Activated CD4-positive, alpha-beta T cell treated with anti-CD3 and anti-CD28 coated beads for 36 hours (primary cell): ENCODE measurements at regions of chr6 and their contacts with region 1.

Region 1: GRCh38 chr6:43516697-43517504 is at the starts of genes POLR1C and YIPF3:
- DNase-seq: peak; percentile 98
- ATAC-seq: peak; percentile 93
- H3K4me3 Mint-ChIP-seq: no peak within 1 kb of the TSS
- H3K27ac Mint-ChIP-seq: no peak within 1 kb of the TSS
- H3K4me1 Mint-ChIP-seq: peaks cover 32% of the 10 kb centered on the region
- H3K27me3 Mint-ChIP-seq: no peaks in the 10 kb centered on the region
- total RNA-seq, gene POLR1C: 43.4 to 52.9 TPM
- total RNA-seq, gene YIPF3: 38.0 to 39.6 TPM

Region 2: GRCh38 chr6:43113431-43114260 is 403.3 kb before region 1 on chr6:
- CTCF ChIA-PET with region 1: no interaction called
- POLR2A ChIA-PET with region 1: interaction called, 10 read pairs
- intact Hi-C with region 1: no loop called
- DNase-seq: no peak
- ATAC-seq: no peak
- H3K4me3 Mint-ChIP-seq: no peak overlapping the region
- H3K27ac Mint-ChIP-seq: peak overlapping the region; percentile 56
- H3K4me1 Mint-ChIP-seq: no peaks in the 10 kb centered on the region
- H3K27me3 Mint-ChIP-seq: no peaks in the 10 kb centered on the region

Region 3: DNA sequence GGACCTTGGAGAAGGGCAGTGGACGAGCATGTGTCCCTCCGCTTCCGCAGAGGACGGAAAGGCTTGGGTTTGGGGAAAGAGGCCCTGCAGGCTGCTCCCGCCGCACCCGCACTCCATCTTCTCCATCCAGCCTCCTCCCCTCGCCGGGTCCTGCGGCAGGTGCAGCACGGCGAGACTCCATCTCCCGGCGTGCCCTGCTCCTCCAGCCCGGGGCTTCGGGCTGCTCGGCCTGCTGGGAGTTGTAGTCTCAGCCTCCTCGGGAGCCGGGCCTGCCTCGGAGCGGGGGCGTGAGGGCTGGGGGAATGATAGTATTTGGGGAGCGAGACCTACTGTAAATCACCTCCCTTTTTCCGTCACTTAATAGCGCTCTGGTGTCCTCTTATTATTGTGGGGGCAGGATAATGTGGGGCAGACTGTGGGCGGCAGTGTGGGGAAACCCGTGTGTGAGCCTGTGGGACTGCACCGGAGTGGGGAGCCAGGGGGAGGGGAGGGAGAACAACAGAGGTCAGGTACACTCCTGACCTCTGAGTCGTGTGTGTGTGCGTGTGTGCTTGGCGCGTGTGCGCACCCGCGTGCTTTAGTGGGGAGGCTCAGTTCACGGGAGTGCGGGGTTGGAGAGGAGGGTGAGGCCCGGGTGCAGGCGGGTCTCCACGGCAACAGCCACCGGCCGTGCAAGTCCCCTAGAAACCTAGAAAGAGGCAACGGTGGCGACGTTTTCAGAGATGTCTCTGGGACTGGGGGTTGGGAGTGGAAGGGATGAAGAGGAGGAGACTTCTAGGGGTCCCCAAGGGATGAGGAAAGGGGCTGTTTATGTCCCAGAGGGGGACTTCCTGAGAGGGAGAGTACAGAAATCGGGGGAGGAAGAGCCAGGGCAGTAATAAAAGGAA is 269.5 kb before region 1 on chr6:
- CTCF ChIA-PET with region 1: interaction called, 3 read pairs
- POLR2A ChIA-PET with region 1: interaction called, 5 read pairs
- intact Hi-C with region 1: loop called in 1 of 2 experiments (anchors 1 kb)
- DNase-seq: peak; percentile 94
- ATAC-seq: peak; percentile 99
- H3K4me3 Mint-ChIP-seq: peak overlapping the region; percentile 68
- H3K27ac Mint-ChIP-seq: peak overlapping the region; percentile 62
- H3K4me1 Mint-ChIP-seq: peaks cover 25% of the 10 kb centered on the region
- H3K27me3 Mint-ChIP-seq: peaks cover 14% of the 10 kb centered on the region

Region 4: GRCh38 chr6:43477235-43478007 is 39.5 kb before region 1 on chr6 and contains the start of gene TJAP1:
- CTCF ChIA-PET with region 1: no interaction called
- POLR2A ChIA-PET with region 1: no interaction called
- intact Hi-C with region 1: loop called (anchors 1 to 5 kb)
- DNase-seq: peak; percentile 98
- ATAC-seq: peak; percentile 99
- H3K4me3 Mint-ChIP-seq: peak within 1 kb of the TSS; percentile 98
- H3K27ac Mint-ChIP-seq: peak within 1 kb of the TSS; percentile 82
- H3K4me1 Mint-ChIP-seq: peaks cover 38% of the 10 kb centered on the region
- H3K27me3 Mint-ChIP-seq: no peaks in the 10 kb centered on the region
- total RNA-seq, gene TJAP1: 35.6 to 37.2 TPM

Region 5: DNA sequence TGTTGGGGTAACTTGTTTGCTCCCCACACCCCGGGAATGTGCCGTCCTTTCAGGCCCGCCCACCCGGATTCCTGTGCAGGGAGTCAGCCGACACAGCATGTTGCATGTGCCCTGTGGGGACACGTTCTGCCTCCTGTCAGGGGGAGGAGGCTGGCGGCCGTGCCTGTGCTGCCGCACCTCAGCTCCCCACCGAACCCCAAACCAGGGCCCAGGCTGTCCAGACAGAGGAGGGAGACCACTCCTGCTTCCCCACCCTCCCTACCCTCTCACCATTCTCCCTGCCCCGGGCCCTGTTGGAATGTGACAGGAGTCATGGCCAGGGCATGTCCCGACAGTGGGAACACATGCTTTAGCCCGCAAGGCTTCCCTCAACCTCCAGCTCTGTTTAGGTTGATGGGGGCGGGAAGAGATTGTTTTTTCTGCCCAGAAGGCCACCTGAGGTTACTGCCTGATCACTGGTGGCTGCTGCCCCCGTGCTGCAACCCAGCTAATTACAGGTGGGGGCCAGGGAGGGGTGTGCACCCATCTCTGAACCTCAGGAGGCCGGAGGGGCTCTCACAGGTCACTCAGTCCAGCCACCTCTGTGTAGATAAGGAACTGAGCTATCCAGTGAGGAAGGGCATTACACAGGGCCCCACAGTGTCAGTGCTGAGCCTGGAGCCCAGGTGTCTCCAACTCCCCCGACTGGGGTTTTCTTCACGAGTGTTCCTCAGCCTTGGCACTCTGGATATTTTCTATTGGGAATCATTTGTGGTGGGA is 20.4 kb before region 1 on chr6:
- CTCF ChIA-PET with region 1: no interaction called
- POLR2A ChIA-PET with region 1: no interaction called
- intact Hi-C with region 1: no loop called
- DNase-seq: peak; percentile 46
- ATAC-seq: peak; percentile 45
- H3K4me3 Mint-ChIP-seq: no peak overlapping the region
- H3K27ac Mint-ChIP-seq: no peak overlapping the region
- H3K4me1 Mint-ChIP-seq: peaks cover 17% of the 10 kb centered on the region
- H3K27me3 Mint-ChIP-seq: no peaks in the 10 kb centered on the region

Region 6: GRCh38 chr6:43570876-43571441 is 54.1 kb after region 1 on chr6:
- CTCF ChIA-PET with region 1: interaction called, 3 read pairs
- POLR2A ChIA-PET with region 1: interaction called, 3 read pairs
- intact Hi-C with region 1: loop called (anchors 1 to 5 kb)
- DNase-seq: peak; percentile 19
- ATAC-seq: peak; percentile 69
- H3K4me3 Mint-ChIP-seq: peak overlapping the region; percentile 2
- H3K27ac Mint-ChIP-seq: peak overlapping the region; percentile 93
- H3K4me1 Mint-ChIP-seq: peaks cover 29% of the 10 kb centered on the region
- H3K27me3 Mint-ChIP-seq: no peaks in the 10 kb centered on the region

Region 7: DNA sequence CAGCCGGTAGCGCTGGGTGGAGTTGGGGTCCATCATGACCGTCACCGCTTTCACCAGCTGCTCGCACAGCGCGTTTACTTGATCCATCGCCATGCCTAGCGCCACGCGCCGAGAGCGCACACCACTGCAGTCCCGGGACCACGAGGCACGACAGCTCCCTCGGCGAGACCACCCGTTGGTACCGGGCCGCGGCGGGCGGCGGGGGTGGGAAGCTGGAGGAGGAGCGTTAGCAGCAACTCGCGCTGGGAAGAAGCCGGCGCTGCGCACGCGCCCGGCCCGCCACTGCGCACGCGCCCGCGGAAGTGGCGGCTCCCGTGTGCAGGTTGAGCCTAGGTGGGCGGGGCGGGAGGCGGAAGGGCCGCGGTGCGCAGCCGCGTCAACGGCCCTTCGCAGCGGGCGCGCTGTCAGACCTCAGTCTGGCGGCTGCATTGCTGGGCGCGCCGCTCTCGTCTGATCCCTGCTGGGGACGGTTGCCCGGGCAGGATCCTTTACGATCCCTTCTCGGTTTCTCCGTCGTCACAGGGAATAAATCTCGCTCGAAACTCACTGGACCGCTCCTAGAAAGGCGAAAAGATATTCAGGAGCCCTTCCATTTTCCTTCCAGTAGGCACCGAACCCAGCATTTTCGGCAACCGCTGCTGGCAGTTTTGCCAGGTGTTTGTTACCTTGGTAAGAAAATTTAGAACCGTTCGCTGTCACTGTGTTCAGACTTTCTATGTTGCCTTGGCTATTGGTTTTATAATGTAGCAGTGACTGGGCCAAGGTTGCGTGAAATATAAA is 59.1 kb after region 1 on chr6 and contains the starts of genes POLH and XPO5:
- CTCF ChIA-PET with region 1: interaction called, 3 read pairs
- POLR2A ChIA-PET with region 1: interaction called, 3 read pairs
- intact Hi-C with region 1: loop called (anchors 1 to 5 kb)
- DNase-seq: peak; percentile 95
- ATAC-seq: peak; percentile 91
- H3K4me3 Mint-ChIP-seq: peak within 1 kb of the TSS; percentile 90
- H3K27ac Mint-ChIP-seq: peak within 1 kb of the TSS; percentile 86
- H3K4me1 Mint-ChIP-seq: peaks cover 44% of the 10 kb centered on the region
- H3K27me3 Mint-ChIP-seq: no peaks in the 10 kb centered on the region
- total RNA-seq, gene POLH: 35.2 to 37.9 TPM
- total RNA-seq, gene XPO5: 108 to 109 TPM

Region 8: GRCh38 chr6:44246663-44247337 is 729.9 kb after region 1 on chr6 and contains the start of gene HSP90AB1:
- CTCF ChIA-PET with region 1: no interaction called
- POLR2A ChIA-PET with region 1: no interaction called
- intact Hi-C with region 1: loop called in 1 of 2 experiments (anchors 5 kb)
- DNase-seq: peak; percentile 98
- ATAC-seq: peak; percentile 86
- H3K4me3 Mint-ChIP-seq: peak within 1 kb of the TSS; percentile 97
- H3K27ac Mint-ChIP-seq: peak within 1 kb of the TSS; percentile 99
- H3K4me1 Mint-ChIP-seq: peaks cover 44% of the 10 kb centered on the region
- H3K27me3 Mint-ChIP-seq: no peaks in the 10 kb centered on the region
- total RNA-seq, gene HSP90AB1: 2,120 to 2,263 TPM